ENCODE measurements at regions of chr12 and their contacts with region 1.

Region 1: GRCh38 chr12:46933947-46934346 is 108.2 kb upstream of the SLC38A4 start:
- DNase-seq: peak; percentile 77
- ATAC-seq: peak; percentile 89
- H3K4me3 ChIP-seq: no peak overlapping the region
- H3K27ac ChIP-seq: no peak overlapping the region
- H3K4me1 ChIP-seq: peaks cover 3% of the 10 kb centered on the region
- H3K27me3 ChIP-seq: no peaks in the 10 kb centered on the region
- CTCF ChIP-seq: peak; percentile 81
- POLR2A ChIP-seq: 0 out of 2 replicates have a peak, but pooled peaks have one; percentile 32
- RAD21 ChIP-seq: peak; percentile 92

Region 2: DNA sequence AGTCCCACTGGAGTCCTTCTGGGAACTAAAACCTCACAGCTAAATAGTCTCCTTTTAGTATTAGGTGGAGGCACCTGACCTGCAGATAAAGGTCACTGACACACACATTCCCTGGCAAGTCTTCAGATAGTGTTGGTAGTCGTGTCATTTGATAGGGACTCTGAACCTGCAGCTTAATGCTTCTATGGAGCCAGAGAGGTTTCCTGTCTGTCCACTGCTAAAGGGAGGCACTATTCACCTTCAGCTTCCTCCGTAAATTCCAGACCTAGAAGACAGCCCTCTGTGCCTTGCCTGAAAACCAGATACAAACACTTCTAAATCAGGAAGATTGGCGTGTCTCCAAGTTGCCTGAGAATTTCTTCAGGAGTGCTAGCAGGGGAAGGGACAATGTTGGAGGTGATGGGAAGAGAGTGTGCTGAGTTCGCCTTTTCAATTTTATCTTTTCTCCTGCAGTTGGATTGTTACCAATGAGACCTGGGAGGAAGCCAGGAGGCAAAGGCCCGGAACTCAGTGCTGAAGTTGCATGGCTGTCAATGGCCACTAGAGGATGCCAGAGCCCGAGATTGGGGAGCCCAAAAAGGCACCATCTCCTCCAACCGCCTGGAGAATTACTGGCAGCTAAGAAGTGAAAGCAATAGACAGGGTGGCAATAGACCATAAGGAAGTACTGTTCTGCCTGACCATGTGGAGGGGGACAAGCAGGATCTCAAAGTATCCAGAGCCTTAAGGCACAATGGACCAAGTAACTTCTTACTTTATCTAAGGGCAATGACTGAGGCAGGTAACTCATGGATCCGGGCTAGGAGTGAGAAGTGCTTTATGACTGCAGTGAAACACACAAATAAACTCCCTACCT is 862.0 kb before region 1 on chr12:
- CTCF ChIA-PET with region 1: interaction called, 3 read pairs
- POLR2A ChIA-PET with region 1: no interaction called
- dilution Hi-C with region 1: no loop called
- in situ Hi-C with region 1: no loop called
- intact Hi-C with region 1: loop called (anchors 2 kb)
- DNase-seq: peak; percentile 71
- ATAC-seq: peak; percentile 95
- H3K4me3 ChIP-seq: no peak overlapping the region
- H3K27ac ChIP-seq: no peak overlapping the region
- H3K4me1 ChIP-seq: peaks cover 2% of the 10 kb centered on the region; the same call in 1 of the 2 replicates
- H3K27me3 ChIP-seq: peaks cover 5% of the 10 kb centered on the region
- CTCF ChIP-seq: peak; percentile 96
- POLR2A ChIP-seq: no peak
- RAD21 ChIP-seq: peak; percentile 92

Region 3: DNA sequence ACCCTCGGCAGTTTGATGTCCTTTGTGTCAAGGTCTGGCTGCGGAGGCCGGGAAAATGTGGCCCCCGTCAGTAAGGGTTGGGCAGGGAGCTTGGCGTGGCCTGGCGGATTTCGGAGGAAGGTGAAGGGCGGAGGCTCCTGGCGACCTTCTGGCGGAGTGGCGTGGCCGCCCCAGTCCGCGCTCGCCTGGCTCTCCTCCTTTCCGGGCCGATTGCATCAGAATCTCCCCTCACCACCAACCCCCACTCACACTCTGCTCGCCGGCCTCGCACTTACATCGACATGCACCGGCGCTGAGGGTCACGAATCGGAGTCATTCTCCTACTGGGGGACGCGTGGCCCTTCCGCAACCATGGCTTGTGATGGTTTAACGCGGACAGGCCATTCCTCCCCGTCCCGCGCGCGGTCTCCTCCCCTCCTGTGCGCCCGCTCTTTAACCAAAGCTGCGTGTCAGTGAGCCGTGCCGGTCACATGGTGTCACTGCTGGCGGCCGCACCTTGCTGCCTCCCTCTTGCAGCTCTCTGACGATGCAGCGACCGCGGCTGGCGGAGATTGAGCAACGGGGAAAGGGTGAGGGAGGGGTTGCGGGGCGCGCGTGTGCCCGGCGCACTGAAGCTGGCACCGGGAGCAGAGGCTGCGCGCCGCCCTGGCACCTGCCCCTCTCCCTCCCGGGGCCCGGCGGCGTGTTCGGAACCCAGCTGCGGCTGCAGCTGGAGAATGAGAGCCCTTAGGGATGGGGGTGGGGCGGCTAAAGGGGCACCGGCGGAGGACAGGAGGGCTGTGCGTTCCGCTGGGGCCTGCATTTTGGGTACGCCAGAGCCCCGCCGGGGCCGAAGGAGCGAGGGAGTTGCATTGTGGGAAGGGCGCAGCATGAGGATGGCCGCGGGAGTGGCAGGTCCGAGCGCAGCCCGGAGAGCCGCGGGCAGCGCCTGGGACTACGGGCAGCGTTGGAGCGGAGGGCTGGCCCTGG is 665.1 kb before region 1 on chr12 and contains the start of gene SLC38A1:
- CTCF ChIA-PET with region 1: no interaction called
- POLR2A ChIA-PET with region 1: no interaction called
- dilution Hi-C with region 1: no loop called
- in situ Hi-C with region 1: no loop called
- intact Hi-C with region 1: loop called (anchors 10 kb)
- DNase-seq: peak; percentile 74
- ATAC-seq: peak; percentile 70
- H3K4me3 ChIP-seq: peak within 1 kb of the TSS; percentile 96
- H3K27ac ChIP-seq: peak within 1 kb of the TSS; percentile 91
- H3K4me1 ChIP-seq: peaks cover 15% of the 10 kb centered on the region
- H3K27me3 ChIP-seq: no peaks in the 10 kb centered on the region
- CTCF ChIP-seq: no peak
- POLR2A ChIP-seq: peak; percentile 63; the same call in 1 of the 2 replicates
- RAD21 ChIP-seq: no peak; the same call in 1 of the 2 replicates
- total RNA-seq, gene SLC38A1: 61.5 and 71.9 TPM in 2 replicates

Region 4: GRCh38 chr12:46372544-46373110 is 561.3 kb before region 1 on chr12 and contains the start of gene SLC38A2:
- CTCF ChIA-PET with region 1: no interaction called
- POLR2A ChIA-PET with region 1: interaction called, 4 read pairs
- dilution Hi-C with region 1: no loop called
- in situ Hi-C with region 1: no loop called
- intact Hi-C with region 1: loop called (anchors 2 kb)
- DNase-seq: peak; percentile 90
- ATAC-seq: peak; percentile 83
- H3K4me3 ChIP-seq: peak within 1 kb of the TSS; percentile 82
- H3K27ac ChIP-seq: peak within 1 kb of the TSS; percentile 94
- H3K4me1 ChIP-seq: peaks cover 10% of the 10 kb centered on the region
- H3K27me3 ChIP-seq: no peaks in the 10 kb centered on the region
- CTCF ChIP-seq: no peak
- POLR2A ChIP-seq: peak; percentile 100
- RAD21 ChIP-seq: peak; percentile 47
- total RNA-seq, gene SLC38A2: 881 and 1,389 TPM in 2 replicates

Region 5: DNA sequence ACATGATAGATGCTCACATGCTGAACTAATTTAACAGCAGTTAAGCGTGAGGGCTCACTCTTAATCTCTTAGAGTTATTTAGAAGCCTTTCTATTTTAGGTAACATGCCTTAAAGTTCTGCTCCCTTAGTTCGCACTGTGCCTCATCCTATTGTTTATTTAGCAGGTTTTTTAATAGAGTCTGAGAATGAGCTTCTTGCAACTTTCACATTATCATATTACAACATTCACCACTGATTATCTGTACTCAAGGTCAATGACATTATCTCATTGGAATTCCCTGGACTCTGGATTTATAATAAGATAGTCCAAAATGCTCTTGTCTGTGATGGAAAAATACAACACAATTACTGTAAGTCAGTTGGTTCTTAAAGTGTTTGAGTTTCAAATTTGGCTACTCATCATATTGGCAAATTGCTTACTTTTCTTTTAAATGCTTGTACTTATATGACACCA is 377.8 kb before region 1 on chr12:
- CTCF ChIA-PET with region 1: no interaction called
- POLR2A ChIA-PET with region 1: no interaction called
- dilution Hi-C with region 1: no loop called
- in situ Hi-C with region 1: no loop called
- intact Hi-C with region 1: loop called (anchors 2 kb)
- DNase-seq: peak; percentile 99
- ATAC-seq: peak; percentile 73
- H3K4me3 ChIP-seq: peak overlapping the region; percentile 10; the same call in 1 of the 2 replicates
- H3K27ac ChIP-seq: peak overlapping the region; percentile 97; the same call in 1 of the 2 replicates
- H3K4me1 ChIP-seq: peaks cover 15% of the 10 kb centered on the region
- H3K27me3 ChIP-seq: no peaks in the 10 kb centered on the region
- CTCF ChIP-seq: no peak
- POLR2A ChIP-seq: no peak
- RAD21 ChIP-seq: peak; percentile 26; the same call in 1 of the 2 replicates

Region 6: DNA sequence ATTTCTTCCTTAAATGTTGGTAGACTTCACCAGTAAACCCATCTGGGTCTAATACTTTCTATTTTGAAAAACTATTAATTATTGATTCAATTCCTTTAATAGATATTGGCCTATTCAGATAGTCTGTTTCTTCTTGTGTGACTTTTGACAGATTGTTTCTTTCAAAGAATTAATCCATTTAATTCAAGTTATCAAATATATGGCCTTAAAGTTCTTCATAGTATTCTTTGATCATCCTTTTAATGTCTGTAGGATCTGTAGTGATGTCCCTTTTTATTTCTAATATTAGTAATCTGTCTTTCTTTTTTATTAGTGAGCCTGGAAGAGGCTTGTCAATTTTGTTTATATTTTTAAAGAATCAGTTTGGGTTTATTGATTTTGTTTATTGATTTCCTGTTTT is 298.1 kb before region 1 on chr12:
- CTCF ChIA-PET with region 1: no interaction called
- POLR2A ChIA-PET with region 1: no interaction called
- dilution Hi-C with region 1: no loop called
- in situ Hi-C with region 1: no loop called
- intact Hi-C with region 1: no loop called
- DNase-seq: no peak
- ATAC-seq: no peak
- H3K4me3 ChIP-seq: no peak overlapping the region
- H3K27ac ChIP-seq: no peak overlapping the region
- H3K4me1 ChIP-seq: peaks cover 3% of the 10 kb centered on the region
- H3K27me3 ChIP-seq: no peaks in the 10 kb centered on the region
- CTCF ChIP-seq: no peak
- POLR2A ChIP-seq: no peak
- RAD21 ChIP-seq: no peak

Region 7: GRCh38 chr12:46675736-46676135 is 258.2 kb before region 1 on chr12:
- CTCF ChIA-PET with region 1: no interaction called
- POLR2A ChIA-PET with region 1: no interaction called
- dilution Hi-C with region 1: no loop called
- in situ Hi-C with region 1: loop called (anchors 25 kb)
- intact Hi-C with region 1: loop called (anchors 2 kb)
- DNase-seq: peak; percentile 44
- ATAC-seq: peak; percentile 60
- H3K4me3 ChIP-seq: no peak overlapping the region
- H3K27ac ChIP-seq: peak overlapping the region; percentile 15; the same call in 1 of the 2 replicates
- H3K4me1 ChIP-seq: peaks cover 3% of the 10 kb centered on the region
- H3K27me3 ChIP-seq: no peaks in the 10 kb centered on the region
- CTCF ChIP-seq: peak; percentile 64
- POLR2A ChIP-seq: no peak
- RAD21 ChIP-seq: peak; percentile 64

Region 8: GRCh38 chr12:46865311-46865710 is 68.6 kb before region 1 on chr12:
- CTCF ChIA-PET with region 1: no interaction called
- POLR2A ChIA-PET with region 1: no interaction called
- dilution Hi-C with region 1: no loop called
- in situ Hi-C with region 1: no loop called
- intact Hi-C with region 1: no loop called
- DNase-seq: no peak
- ATAC-seq: no peak
- H3K4me3 ChIP-seq: no peak overlapping the region
- H3K27ac ChIP-seq: no peak overlapping the region
- H3K4me1 ChIP-seq: no peaks in the 10 kb centered on the region
- H3K27me3 ChIP-seq: no peaks in the 10 kb centered on the region
- CTCF ChIP-seq: no peak
- POLR2A ChIP-seq: no peak
- RAD21 ChIP-seq: no peak

Region 9: GRCh38 chr12:46959482-46959881 is 25.5 kb after region 1 on chr12:
- CTCF ChIA-PET with region 1: no interaction called
- POLR2A ChIA-PET with region 1: no interaction called
- dilution Hi-C with region 1: no loop called
- in situ Hi-C with region 1: no loop called
- intact Hi-C with region 1: no loop called
- DNase-seq: peak; percentile 93
- ATAC-seq: peak; percentile 82
- H3K4me3 ChIP-seq: no peak overlapping the region
- H3K27ac ChIP-seq: no peak overlapping the region
- H3K4me1 ChIP-seq: peaks cover 7% of the 10 kb centered on the region
- H3K27me3 ChIP-seq: no peaks in the 10 kb centered on the region
- CTCF ChIP-seq: no peak
- POLR2A ChIP-seq: no peak
- RAD21 ChIP-seq: no peak

Region 10: DNA sequence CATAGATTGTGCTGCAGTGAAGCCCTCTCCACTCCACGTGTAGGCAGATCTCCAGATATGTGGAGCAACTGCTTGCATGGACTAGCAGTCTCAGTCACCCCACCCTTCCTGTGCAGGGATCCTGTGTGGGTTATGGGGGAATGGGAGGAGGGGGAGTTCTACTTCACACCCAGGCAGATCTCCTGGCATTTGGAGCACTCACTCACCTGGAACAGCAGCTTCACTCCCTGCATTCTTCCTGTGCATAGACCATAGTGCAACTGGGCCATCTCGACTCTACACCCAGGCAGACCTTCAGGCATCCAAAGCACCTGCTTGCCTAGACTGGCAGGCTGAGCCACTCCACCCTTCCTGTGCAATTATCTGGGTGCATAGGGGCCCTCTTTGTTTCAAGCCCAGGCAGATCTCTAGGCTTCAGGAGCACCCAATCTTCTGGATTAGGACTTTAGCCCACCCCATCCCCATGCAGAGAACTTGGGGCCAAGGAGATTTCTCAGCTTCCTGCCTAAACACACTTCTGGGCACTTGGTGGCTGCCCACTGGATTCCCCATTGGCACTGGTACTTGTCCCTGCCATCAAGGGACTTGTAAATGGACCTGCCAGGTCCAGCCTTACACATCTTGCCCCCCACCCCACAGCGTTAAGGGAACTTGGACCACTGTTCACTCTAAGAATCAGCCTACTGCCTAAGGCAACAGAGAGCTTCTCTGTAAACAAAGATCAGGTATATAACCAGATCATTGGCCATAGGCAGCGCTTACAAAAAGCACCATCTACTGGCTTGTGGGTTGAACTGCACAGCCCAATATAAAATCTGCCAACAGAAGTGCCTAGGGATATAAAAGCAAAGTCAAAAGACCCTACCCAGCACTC is 49.7 kb after region 1 on chr12:
- CTCF ChIA-PET with region 1: interaction called, 11 read pairs
- POLR2A ChIA-PET with region 1: no interaction called
- dilution Hi-C with region 1: no loop called
- in situ Hi-C with region 1: no loop called
- intact Hi-C with region 1: no loop called
- DNase-seq: peak; percentile 75
- ATAC-seq: peak; percentile 98
- H3K4me3 ChIP-seq: no peak overlapping the region
- H3K27ac ChIP-seq: no peak overlapping the region
- H3K4me1 ChIP-seq: no peaks in the 10 kb centered on the region
- H3K27me3 ChIP-seq: no peaks in the 10 kb centered on the region
- CTCF ChIP-seq: peak; percentile 85
- POLR2A ChIP-seq: no peak
- RAD21 ChIP-seq: peak; percentile 89

Measured in IMR-90 (cell line).